ENCODE measurements at regions of chr1 and their contacts with region 1.

Region 1: DNA sequence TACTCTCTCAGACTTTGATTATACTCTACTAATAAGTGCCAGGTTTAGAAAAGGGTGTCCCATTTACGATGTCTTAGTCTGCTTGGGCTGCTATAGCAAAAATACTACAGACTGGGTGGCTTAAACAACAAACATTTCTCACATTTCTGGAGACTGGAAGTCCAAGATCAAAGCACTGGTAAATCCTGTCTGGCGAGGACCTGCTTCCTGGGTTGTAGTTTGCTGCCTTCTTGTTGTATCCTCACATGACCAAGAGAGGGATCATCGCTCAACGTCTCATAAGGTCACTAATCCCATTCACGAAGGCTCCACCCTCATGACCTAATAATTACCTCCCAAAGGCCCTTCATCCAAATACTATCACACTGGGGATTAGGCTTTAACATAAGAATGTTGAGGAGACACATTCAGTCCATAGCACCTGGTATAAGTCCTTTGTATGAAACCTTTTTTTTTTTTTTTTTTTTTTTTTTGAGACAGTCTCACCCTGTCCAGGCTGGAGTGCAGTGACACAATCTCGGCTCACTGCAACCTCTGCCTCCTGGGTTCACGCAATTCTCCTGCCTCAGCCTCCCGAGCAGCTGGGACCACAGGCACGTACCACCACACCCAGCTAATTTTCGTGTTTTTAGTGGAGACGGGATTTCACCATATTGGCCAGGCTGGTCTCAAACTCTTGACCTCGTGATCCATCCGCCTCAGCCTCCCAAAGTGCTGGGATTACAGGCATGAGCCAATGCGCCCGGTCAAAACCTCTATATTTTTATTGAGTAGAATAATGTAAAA is 12.2 kb downstream of the PRDX6 start:
- DNase-seq: no peak
- H3K4me3 ChIP-seq: no peak overlapping the region
- H3K27ac ChIP-seq: no peak overlapping the region
- H3K4me1 ChIP-seq: no peaks in the 10 kb centered on the region
- H3K27me3 ChIP-seq: no peaks in the 10 kb centered on the region
- CTCF ChIP-seq: no peak
- EP300 ChIP-seq: no peak
- POLR2A ChIP-seq: no peak

Region 2: GRCh38 chr1:173269490-173270230 is 219.7 kb before region 1 on chr1:
- intact Hi-C with region 1: no loop called
- DNase-seq: no peak
- H3K4me3 ChIP-seq: no peak overlapping the region
- H3K27ac ChIP-seq: no peak overlapping the region
- H3K4me1 ChIP-seq: no peaks in the 10 kb centered on the region
- H3K27me3 ChIP-seq: no peaks in the 10 kb centered on the region
- CTCF ChIP-seq: no peak
- EP300 ChIP-seq: no peak
- POLR2A ChIP-seq: no peak

Region 3: GRCh38 chr1:173383351-173383750 is 106.0 kb before region 1 on chr1:
- intact Hi-C with region 1: no loop called
- DNase-seq: no peak
- H3K4me3 ChIP-seq: no peak overlapping the region
- H3K27ac ChIP-seq: no peak overlapping the region
- H3K4me1 ChIP-seq: no peaks in the 10 kb centered on the region
- H3K27me3 ChIP-seq: no peaks in the 10 kb centered on the region
- CTCF ChIP-seq: no peak
- EP300 ChIP-seq: no peak
- POLR2A ChIP-seq: no peak

Region 4: GRCh38 chr1:173429471-173430402 is 59.6 kb before region 1 on chr1:
- intact Hi-C with region 1: no loop called
- DNase-seq: peak; percentile 95
- H3K4me3 ChIP-seq: peak overlapping the region; percentile 28 to 41 (median 33)
- H3K27ac ChIP-seq: peak overlapping the region; percentile 79 to 88 (median 84)
- H3K4me1 ChIP-seq: peaks cover 26 to 33% (median 31%) of the 10 kb centered on the region in 4 donors
- H3K27me3 ChIP-seq: no peaks in the 10 kb centered on the region
- CTCF ChIP-seq: peak; percentile 67 to 73 (median 70)
- EP300 ChIP-seq: no peak
- POLR2A ChIP-seq: no peak

Region 5: GRCh38 chr1:173527151-173527826 is 37.9 kb after region 1 on chr1:
- intact Hi-C with region 1: no loop called
- DNase-seq: no peak
- H3K4me3 ChIP-seq: no peak overlapping the region
- H3K27ac ChIP-seq: no peak overlapping the region
- H3K4me1 ChIP-seq: peaks cover 4 to 14% (median 5%) of the 10 kb centered on the region in 4 donors
- H3K27me3 ChIP-seq: no peaks in the 10 kb centered on the region
- CTCF ChIP-seq: no peak
- EP300 ChIP-seq: no peak
- POLR2A ChIP-seq: no peak

Region 6: GRCh38 chr1:173714759-173715537 is 225.6 kb after region 1 on chr1 and contains the start of gene KLHL20:
- intact Hi-C with region 1: loop called (anchors 10 kb)
- DNase-seq: peak; percentile 92
- H3K4me3 ChIP-seq: peak within 1 kb of the TSS; percentile 75 to 91 (median 82)
- H3K27ac ChIP-seq: peak within 1 kb of the TSS; percentile 89 to 94 (median 90)
- H3K4me1 ChIP-seq: peaks cover 14 to 35% (median 26%) of the 10 kb centered on the region in 4 donors
- H3K27me3 ChIP-seq: peaks cover 0 to 9% (median under 1%) of the 10 kb centered on the region in 4 donors
- CTCF ChIP-seq: peak in 2 of 3 experiments; percentile 7 to 21
- EP300 ChIP-seq: no peak
- POLR2A ChIP-seq: peak; percentile 24
- total RNA-seq, gene KLHL20: 28.3 to 38.3 (median 33.3) TPM